Heart left ventricle (tissue), 16 donors: ENCODE measurements at regions of chr6 and their contacts with region 1.

Region 1: DNA sequence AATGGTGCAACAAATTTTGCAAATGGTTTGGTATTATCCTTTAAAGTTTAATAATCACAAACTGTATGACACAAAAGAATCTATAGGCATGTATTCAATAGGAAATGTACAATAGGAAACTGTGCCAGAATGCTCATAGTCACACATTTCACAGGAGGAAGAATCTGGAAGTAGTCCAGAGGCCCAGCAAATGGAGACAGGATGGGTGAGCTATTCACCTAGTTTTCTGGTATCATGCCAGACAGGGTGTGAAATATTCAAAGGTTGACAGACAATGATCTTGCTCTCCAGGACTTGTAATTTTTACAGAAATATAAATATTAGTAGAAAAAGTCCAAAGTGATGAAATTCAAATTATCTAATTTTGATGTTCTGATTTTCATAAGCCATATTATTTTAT is 520.1 kb upstream of the IMPG1 start:
- DNase-seq: no peak
- ATAC-seq: no peak
- H3K4me3 ChIP-seq: no peak overlapping the region
- H3K27ac ChIP-seq: no peak overlapping the region
- H3K4me1 ChIP-seq: no peaks in the 10 kb centered on the region
- H3K27me3 ChIP-seq: no peaks in the 10 kb centered on the region
- CTCF ChIP-seq: no peak
- POLR2A ChIP-seq: no peak

Region 2: GRCh38 chr6:75824160-75824559 is 768.4 kb before region 1 on chr6:
- intact Hi-C with region 1: no loop called
- DNase-seq: no peak
- ATAC-seq: no peak
- H3K4me3 ChIP-seq: no peak overlapping the region
- H3K27ac ChIP-seq: no peak overlapping the region
- H3K4me1 ChIP-seq: no peaks in the 10 kb centered on the region
- H3K27me3 ChIP-seq: no peaks in the 10 kb centered on the region
- CTCF ChIP-seq: no peak
- POLR2A ChIP-seq: no peak

Region 3: DNA sequence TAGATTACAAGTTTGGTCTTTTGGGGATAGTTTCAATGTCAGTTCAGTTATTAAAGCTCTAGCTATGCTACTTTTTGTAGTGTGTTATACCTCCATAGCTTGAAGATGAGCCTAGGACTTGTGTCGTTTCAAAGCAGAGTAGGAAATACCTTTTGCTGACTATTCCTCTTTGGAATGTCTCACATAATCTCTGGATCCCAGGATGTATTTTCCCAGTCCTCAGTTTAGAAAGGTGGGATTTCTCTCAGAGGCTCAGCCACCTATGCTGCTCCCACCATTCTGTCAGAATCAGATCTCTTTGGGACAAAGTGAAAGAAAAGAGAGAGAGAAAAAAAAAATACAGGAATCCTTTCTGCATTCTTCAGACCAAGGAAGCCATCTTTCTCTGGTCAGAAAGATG is 47.4 kb after region 1 on chr6:
- intact Hi-C with region 1: loop called in 1 of 10 experiments (anchors 2 kb)
- DNase-seq: no peak
- ATAC-seq: no peak
- H3K4me3 ChIP-seq: no peak overlapping the region
- H3K27ac ChIP-seq: no peak overlapping the region
- H3K4me1 ChIP-seq: no peaks in the 10 kb centered on the region
- H3K27me3 ChIP-seq: no peaks in the 10 kb centered on the region
- CTCF ChIP-seq: no peak
- POLR2A ChIP-seq: no peak

Region 4: DNA sequence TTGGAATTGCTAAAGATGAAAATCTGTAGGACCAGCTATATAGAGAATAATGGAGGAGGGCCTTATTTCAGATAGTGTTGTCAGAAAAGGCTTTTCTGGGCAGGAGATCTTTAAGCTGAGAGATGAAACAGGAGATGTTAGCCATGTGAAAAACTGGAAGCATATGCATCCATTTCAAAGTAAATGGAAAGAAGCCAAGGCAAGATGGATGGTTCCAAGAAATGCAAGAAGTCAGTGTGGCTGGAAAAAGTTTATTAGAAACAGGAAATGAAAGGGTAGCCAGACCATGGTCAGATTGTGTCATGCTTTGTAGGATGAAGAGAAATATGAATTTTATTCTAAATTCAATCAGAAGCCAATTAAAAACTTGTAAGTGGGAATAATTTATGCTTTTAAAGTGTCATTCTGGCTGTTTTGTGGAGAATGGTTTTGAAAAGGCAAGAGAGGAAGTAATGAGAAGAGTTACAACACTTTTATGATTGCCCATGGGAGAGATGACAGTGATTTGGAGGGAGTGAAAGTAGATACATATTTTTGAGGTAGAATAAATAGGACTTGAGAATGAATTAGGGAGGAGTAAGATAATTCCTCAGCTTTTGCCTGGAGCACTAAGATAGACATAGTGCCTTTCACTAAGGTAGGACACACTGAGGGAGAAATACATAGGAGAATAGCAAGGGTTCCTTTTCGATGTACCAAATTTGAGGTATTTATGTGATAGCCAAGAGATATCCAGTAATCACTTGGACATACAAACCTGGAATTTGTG is 250.7 kb after region 1 on chr6:
- intact Hi-C with region 1: no loop called
- DNase-seq: no peak
- ATAC-seq: no peak
- H3K4me3 ChIP-seq: no peak overlapping the region
- H3K27ac ChIP-seq: no peak overlapping the region
- H3K4me1 ChIP-seq: peaks cover 0 to 2% (median 0%) of the 10 kb centered on the region in 12 donors
- H3K27me3 ChIP-seq: no peaks in the 10 kb centered on the region
- CTCF ChIP-seq: no peak
- POLR2A ChIP-seq: no peak